ENCODE measurements at regions of chr9 and their contacts with region 1.

Region 1: DNA sequence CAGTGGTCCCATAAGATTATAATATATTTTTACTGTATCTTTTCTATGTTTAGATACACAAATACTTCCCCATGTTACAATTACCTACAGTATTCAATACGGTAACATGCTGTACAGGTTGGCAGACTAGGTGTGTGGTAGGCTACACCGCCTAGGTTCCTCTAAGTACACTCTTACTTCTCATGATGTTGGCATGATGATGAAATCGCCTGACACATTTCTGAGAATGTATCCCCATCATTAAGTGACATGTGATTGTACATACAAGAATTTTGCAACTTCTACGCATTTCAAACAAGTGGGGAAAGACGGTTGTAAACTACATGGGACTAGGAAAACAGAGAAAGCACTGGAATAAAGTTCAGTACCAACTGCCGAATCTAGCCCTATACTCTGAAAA is 53.3 kb downstream of the SETX start:
- DNase-seq: no peak
- H3K4me3 ChIP-seq: no peak overlapping the region
- H3K27ac ChIP-seq: no peak overlapping the region
- H3K4me1 ChIP-seq: no peaks in the 10 kb centered on the region
- H3K27me3 ChIP-seq: no peaks in the 10 kb centered on the region
- CTCF ChIP-seq: no peak

Region 2: DNA sequence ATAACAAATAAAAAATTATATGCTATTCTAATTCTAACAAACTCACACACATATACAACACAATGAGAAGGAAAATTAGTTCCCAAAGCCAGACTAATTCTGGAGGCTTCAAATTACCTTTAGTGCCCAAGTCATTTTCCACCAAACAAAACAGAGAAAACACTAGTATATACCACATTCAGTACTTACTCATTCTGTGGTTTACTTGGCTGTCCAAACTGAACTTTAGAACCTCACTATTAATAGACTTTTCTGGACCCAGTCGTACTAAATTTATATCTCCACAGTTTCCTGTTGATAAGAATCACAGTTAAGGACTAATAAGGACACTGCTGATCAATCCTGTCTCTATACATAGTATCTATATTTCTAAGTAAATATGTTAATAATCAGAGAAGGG is 13.2 kb before region 1 on chr9:
- CTCF ChIA-PET with region 1: interaction called, 15 read pairs
- dilution Hi-C with region 1: no loop called
- in situ Hi-C with region 1: no loop called
- intact Hi-C with region 1: no loop called
- DNase-seq: peak; percentile 9
- H3K4me3 ChIP-seq: no peak overlapping the region
- H3K27ac ChIP-seq: no peak overlapping the region
- H3K4me1 ChIP-seq: no peaks in the 10 kb centered on the region
- H3K27me3 ChIP-seq: no peaks in the 10 kb centered on the region
- CTCF ChIP-seq: no peak